ENCODE measurements at regions of chr1 and their contacts with region 1.

Region 1: GRCh38 chr1:93304716-93305138 is 41.0 kb upstream of the DR1 start:
- DNase-seq: peak; percentile 57
- H3K4me3 Mint-ChIP-seq: no peak overlapping the region
- H3K27ac Mint-ChIP-seq: no peak overlapping the region
- H3K4me1 Mint-ChIP-seq: no peaks in the 10 kb centered on the region
- H3K27me3 Mint-ChIP-seq: no peaks in the 10 kb centered on the region
- CTCF ChIP-seq: peak; percentile 68

Region 2: GRCh38 chr1:93345633-93346420 is 41.1 kb after region 1 on chr1 and contains the start of gene DR1:
- CTCF ChIA-PET with region 1: interaction called, 13 read pairs
- intact Hi-C with region 1: loop called (anchors 10 kb)
- DNase-seq: peak; percentile 96
- H3K4me3 Mint-ChIP-seq: peak within 1 kb of the TSS; percentile 99
- H3K27ac Mint-ChIP-seq: peak within 1 kb of the TSS; percentile 95
- H3K4me1 Mint-ChIP-seq: no peaks in the 10 kb centered on the region
- H3K27me3 Mint-ChIP-seq: no peaks in the 10 kb centered on the region
- CTCF ChIP-seq: no peak
- total RNA-seq, gene DR1: 51.1 and 51.5 TPM in 2 replicates

Region 3: DNA sequence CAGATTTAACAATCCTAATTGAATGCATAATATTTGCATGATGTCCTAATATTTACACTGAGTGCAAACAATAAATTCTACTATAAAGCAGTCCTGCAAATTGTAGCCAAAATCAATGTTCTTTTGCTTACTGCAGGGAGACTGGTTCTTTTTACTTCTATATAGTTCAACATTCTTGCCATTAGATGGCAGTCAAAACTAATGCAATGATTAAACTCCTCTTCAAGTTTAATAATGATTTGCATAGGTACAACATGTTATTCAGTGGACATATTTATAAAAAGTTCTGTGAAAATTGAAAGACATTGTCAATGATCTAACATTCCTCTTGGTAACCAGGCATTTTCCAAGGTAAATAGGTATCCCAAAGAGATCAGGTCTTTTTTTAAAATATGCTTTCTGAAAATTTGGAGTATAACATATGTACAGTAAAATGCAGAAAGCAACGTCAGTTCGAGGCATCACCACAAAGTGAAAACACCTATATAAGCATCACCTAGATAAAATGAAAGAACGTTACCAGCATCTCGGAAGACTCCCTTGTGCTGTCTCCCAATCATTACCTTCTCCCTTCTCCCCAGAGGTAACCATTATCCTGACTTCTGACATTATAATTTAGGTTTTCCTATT is 133.4 kb after region 1 on chr1:
- CTCF ChIA-PET with region 1: interaction called, 5 read pairs
- intact Hi-C with region 1: loop called (anchors 5 kb)
- DNase-seq: no peak
- H3K4me3 Mint-ChIP-seq: no peak overlapping the region
- H3K27ac Mint-ChIP-seq: no peak overlapping the region
- H3K4me1 Mint-ChIP-seq: peaks cover 14% of the 10 kb centered on the region
- H3K27me3 Mint-ChIP-seq: no peaks in the 10 kb centered on the region
- CTCF ChIP-seq: peak; percentile 43

Region 4: DNA sequence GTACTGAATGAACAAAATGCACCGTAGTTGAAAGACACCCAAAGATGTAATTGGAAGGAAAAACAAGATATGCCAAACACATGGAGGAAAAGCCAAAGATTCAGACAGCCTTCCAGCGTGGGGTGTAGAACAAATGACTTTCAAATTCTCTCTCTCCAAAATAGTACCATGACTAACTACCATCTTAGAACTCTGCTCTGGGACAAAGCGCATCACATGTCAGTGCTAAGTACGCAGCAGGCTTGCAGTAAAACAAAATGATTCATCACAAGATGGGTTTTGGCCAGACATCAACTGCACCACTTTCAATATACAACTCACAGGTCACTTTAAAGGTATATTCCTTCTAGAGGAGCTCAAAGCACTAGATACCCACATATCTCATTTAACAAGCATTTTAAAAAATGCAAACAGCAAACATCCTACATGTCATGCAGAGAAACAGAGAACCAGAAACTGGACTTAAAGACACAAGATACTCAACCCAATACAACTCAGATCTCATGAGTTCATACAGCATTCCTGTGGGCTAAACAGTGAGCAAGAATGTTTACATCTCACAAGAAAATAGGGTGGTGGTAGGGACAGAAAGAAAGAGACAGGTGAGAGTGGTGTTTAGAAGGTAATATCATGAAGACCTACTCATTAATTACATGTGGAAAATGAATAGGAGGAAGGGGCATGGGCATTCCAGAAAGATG is 301.2 kb after region 1 on chr1:
- CTCF ChIA-PET with region 1: no interaction called
- intact Hi-C with region 1: no loop called
- DNase-seq: no peak
- H3K4me3 Mint-ChIP-seq: no peak overlapping the region
- H3K27ac Mint-ChIP-seq: no peak overlapping the region
- H3K4me1 Mint-ChIP-seq: peaks cover 49% of the 10 kb centered on the region
- H3K27me3 Mint-ChIP-seq: no peaks in the 10 kb centered on the region
- CTCF ChIP-seq: no peak